IMR-90 (cell line): ENCODE measurements at regions of chr20 and their contacts with region 1.

Region 1: GRCh38 chr20:2451939-2452732 is 18.5 kb downstream of the SNRPB start:
- DNase-seq: peak; percentile 62
- ATAC-seq: peak; percentile 90
- H3K4me3 ChIP-seq: no peak overlapping the region
- H3K27ac ChIP-seq: no peak overlapping the region
- H3K4me1 ChIP-seq: no peaks in the 10 kb centered on the region
- H3K27me3 ChIP-seq: no peaks in the 10 kb centered on the region
- CTCF ChIP-seq: peak; percentile 79
- POLR2A ChIP-seq: no peak
- RAD21 ChIP-seq: peak; percentile 65

Region 2: GRCh38 chr20:1965520-1966351 is 486.4 kb before region 1 on chr20:
- CTCF ChIA-PET with region 1: no interaction called
- POLR2A ChIA-PET with region 1: no interaction called
- dilution Hi-C with region 1: no loop called
- in situ Hi-C with region 1: no loop called
- intact Hi-C with region 1: loop called (anchors 1 kb)
- DNase-seq: peak; percentile 54
- ATAC-seq: peak; percentile 83
- H3K4me3 ChIP-seq: no peak overlapping the region
- H3K27ac ChIP-seq: no peak overlapping the region
- H3K4me1 ChIP-seq: no peaks in the 10 kb centered on the region
- H3K27me3 ChIP-seq: peaks cover 60% of the 10 kb centered on the region
- CTCF ChIP-seq: peak; percentile 86
- POLR2A ChIP-seq: no peak
- RAD21 ChIP-seq: peak; percentile 84

Region 3: GRCh38 chr20:2109425-2110210 is 342.5 kb before region 1 on chr20:
- CTCF ChIA-PET with region 1: no interaction called
- POLR2A ChIA-PET with region 1: no interaction called
- dilution Hi-C with region 1: no loop called
- in situ Hi-C with region 1: no loop called
- intact Hi-C with region 1: loop called (anchors 10 kb)
- DNase-seq: no peak
- ATAC-seq: peak; percentile 28; the same call in 1 of the 2 replicates
- H3K4me3 ChIP-seq: no peak overlapping the region
- H3K27ac ChIP-seq: peak overlapping the region; percentile 8; the same call in 1 of the 2 replicates
- H3K4me1 ChIP-seq: peaks cover 8% of the 10 kb centered on the region
- H3K27me3 ChIP-seq: no peaks in the 10 kb centered on the region
- CTCF ChIP-seq: no peak
- POLR2A ChIP-seq: no peak
- RAD21 ChIP-seq: no peak

Region 4: DNA sequence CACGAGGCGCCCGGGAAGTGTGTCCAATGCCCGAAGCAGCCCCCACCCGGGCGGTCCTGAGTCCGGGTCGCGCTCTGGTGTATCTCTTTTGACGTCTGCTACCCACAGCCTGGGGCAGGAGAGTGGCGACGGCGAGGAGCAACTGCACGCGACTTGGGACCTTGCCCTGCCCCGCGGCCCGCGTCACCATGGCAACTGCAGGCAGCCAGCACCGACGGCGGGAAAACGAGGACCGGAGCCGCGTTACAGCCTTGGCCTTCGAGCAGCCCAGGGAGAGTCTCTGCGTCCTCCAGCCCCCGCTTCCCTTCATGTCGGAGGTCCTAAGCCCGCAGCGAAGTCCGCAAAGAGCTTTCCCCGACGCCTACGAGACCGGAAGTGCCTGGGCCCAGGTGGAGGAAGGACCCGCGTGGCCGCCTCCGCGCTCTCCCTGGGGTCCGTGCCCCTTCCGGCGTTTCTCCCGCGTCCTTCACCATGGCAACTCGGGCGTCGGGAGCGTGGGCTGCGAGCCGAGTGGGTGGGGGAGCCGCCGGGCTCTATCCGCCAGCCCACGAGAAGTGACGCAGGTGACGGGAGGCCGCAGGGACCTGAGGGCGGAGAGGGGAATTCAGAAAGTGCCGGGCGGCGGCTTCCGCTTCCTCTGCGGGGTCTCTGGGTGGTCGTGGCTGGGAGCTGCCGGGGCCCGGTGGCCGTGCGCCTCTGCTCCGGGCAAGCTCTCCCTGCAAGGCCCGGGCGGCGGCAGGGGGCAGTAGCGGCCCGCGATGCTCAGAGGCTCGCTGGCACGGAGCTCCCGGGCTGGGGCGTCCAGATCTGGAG is 245.0 kb before region 1 on chr20:
- CTCF ChIA-PET with region 1: interaction called, 13 read pairs
- POLR2A ChIA-PET with region 1: no interaction called
- dilution Hi-C with region 1: no loop called
- in situ Hi-C with region 1: loop called (anchors 10 kb)
- intact Hi-C with region 1: loop called (anchors 1 kb)
- DNase-seq: peak; percentile 28
- ATAC-seq: peak; percentile 97
- H3K4me3 ChIP-seq: peak overlapping the region; percentile 37
- H3K27ac ChIP-seq: no peak overlapping the region
- H3K4me1 ChIP-seq: no peaks in the 10 kb centered on the region
- H3K27me3 ChIP-seq: peaks cover 21% of the 10 kb centered on the region
- CTCF ChIP-seq: peak; percentile 76
- POLR2A ChIP-seq: no peak
- RAD21 ChIP-seq: peak; percentile 79

Region 5: GRCh38 chr20:2255926-2256531 is 196.1 kb before region 1 on chr20:
- CTCF ChIA-PET with region 1: no interaction called
- POLR2A ChIA-PET with region 1: no interaction called
- dilution Hi-C with region 1: no loop called
- in situ Hi-C with region 1: no loop called
- intact Hi-C with region 1: no loop called
- DNase-seq: no peak
- ATAC-seq: no peak
- H3K4me3 ChIP-seq: no peak overlapping the region
- H3K27ac ChIP-seq: no peak overlapping the region
- H3K4me1 ChIP-seq: no peaks in the 10 kb centered on the region
- H3K27me3 ChIP-seq: peaks cover 8% of the 10 kb centered on the region; the same call in 1 of the 2 replicates
- CTCF ChIP-seq: no peak
- POLR2A ChIP-seq: no peak
- RAD21 ChIP-seq: no peak

Region 6: GRCh38 chr20:2353241-2353640 is 98.9 kb before region 1 on chr20:
- CTCF ChIA-PET with region 1: no interaction called
- POLR2A ChIA-PET with region 1: no interaction called
- dilution Hi-C with region 1: no loop called
- in situ Hi-C with region 1: no loop called
- intact Hi-C with region 1: loop called (anchors 1 kb)
- DNase-seq: no peak
- ATAC-seq: no peak
- H3K4me3 ChIP-seq: no peak overlapping the region
- H3K27ac ChIP-seq: no peak overlapping the region
- H3K4me1 ChIP-seq: no peaks in the 10 kb centered on the region
- H3K27me3 ChIP-seq: no peaks in the 10 kb centered on the region; the same call in 1 of the 2 replicates
- CTCF ChIP-seq: no peak
- POLR2A ChIP-seq: no peak
- RAD21 ChIP-seq: no peak

Region 7: DNA sequence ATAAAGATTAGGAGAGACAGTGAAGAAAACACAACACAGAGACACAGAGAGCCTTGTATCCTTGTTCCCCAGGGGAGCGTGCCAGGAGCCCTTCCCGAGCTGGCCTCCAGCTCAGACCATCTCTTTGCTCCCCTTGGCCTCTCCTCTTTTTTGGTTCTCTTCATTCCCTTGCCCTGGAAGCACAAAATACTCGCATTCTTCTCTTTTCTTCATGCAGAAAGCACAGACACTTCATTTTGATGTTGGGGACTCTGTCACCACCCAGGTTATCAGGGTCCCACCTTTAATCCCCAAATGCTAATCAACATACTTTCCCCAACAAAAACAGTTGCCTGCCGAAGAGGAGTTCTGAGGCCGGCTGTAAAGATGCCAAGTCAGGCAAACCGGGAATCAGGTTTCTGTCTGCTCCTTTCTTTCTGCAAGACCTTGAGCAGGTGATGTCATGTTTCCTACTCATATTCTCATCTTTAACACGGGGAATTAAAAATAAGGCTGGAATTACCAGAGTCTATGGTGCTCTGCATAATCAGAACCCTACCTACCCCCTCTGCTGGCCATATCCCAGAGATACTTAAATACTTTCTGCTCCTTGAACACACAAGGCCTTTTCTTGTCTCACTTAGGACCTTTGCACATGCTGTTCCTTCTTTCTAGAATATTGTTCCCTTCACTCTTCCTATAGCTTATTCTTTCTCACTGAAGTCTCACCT is 49.7 kb before region 1 on chr20:
- CTCF ChIA-PET with region 1: no interaction called
- POLR2A ChIA-PET with region 1: no interaction called
- dilution Hi-C with region 1: no loop called
- in situ Hi-C with region 1: no loop called
- intact Hi-C with region 1: no loop called
- DNase-seq: peak; percentile 51
- ATAC-seq: peak; percentile 70
- H3K4me3 ChIP-seq: no peak overlapping the region
- H3K27ac ChIP-seq: no peak overlapping the region
- H3K4me1 ChIP-seq: no peaks in the 10 kb centered on the region
- H3K27me3 ChIP-seq: no peaks in the 10 kb centered on the region; the same call in 1 of the 2 replicates
- CTCF ChIP-seq: peak; percentile 44
- POLR2A ChIP-seq: no peak
- RAD21 ChIP-seq: peak; percentile 34